Dorsolateral prefrontal cortex (tissue), 120 donors: ENCODE measurements at regions of chr2 and their contacts with region 1.

Region 1: DNA sequence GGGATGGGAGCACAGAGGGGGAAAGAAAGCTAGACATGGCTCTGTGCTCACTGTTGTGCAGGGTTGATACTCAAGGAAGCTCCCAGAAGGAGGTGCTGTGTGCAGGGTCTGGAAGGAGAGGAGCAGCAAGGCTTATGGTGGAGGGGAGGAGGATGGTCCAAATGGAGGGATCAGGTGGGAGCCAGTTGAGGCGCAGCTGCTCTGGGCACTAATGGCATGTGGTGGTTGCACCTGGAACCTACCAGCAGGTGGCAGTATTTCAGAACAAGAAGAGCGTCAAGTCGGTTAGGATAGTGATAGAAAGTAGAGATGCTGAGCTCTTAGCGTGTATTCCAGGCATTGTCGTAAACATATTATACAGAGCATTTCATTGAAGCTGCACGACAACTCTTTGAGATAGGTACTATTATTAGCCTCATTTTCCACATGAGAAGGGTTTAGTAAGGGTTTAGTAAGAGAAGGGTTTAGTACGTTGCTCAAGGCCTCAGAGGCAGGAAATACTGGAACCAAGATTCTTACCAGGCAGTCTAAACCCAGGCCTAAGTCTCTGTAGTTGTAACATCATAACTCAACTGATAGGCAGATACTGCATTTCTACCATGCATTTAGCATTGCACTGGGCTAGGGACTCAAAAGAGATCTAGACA is 223.7 kb downstream of the CYP26B1 start:
- DNase-seq: peak in 7 of 10 donors; percentile 40 to 75 (median 69)
- H3K4me3 ChIP-seq: no peak overlapping the region
- H3K27ac ChIP-seq: no peak overlapping the region
- H3K27me3 ChIP-seq: no peaks in the 10 kb centered on the region
- CTCF ChIP-seq: peak; percentile 73 to 95 (median 89)

Region 2: GRCh38 chr2:71798266-71799012 is 125.6 kb before region 1 on chr2:
- intact Hi-C with region 1: loop called in 1 of 2 experiments (anchors 10 kb)
- DNase-seq: no peak
- H3K4me3 ChIP-seq: no peak overlapping the region
- H3K27ac ChIP-seq: no peak overlapping the region
- H3K27me3 ChIP-seq: peaks cover 0 to 5% (median 0%) of the 10 kb centered on the region in 45 donors
- CTCF ChIP-seq: peak in 55 of 56 donors; percentile 23 to 78 (median 66)

Region 3: GRCh38 chr2:72579591-72580180 is 655.7 kb after region 1 on chr2:
- intact Hi-C with region 1: loop called (anchors 5 to 10 kb)
- DNase-seq: no peak
- H3K4me3 ChIP-seq: no peak overlapping the region
- H3K27ac ChIP-seq: no peak overlapping the region
- H3K27me3 ChIP-seq: no peaks in the 10 kb centered on the region
- CTCF ChIP-seq: peak; percentile 56 to 90 (median 75)